SK-N-SH (cell line): ENCODE measurements at regions of chr11 and their contacts with region 1.

Region 1: DNA sequence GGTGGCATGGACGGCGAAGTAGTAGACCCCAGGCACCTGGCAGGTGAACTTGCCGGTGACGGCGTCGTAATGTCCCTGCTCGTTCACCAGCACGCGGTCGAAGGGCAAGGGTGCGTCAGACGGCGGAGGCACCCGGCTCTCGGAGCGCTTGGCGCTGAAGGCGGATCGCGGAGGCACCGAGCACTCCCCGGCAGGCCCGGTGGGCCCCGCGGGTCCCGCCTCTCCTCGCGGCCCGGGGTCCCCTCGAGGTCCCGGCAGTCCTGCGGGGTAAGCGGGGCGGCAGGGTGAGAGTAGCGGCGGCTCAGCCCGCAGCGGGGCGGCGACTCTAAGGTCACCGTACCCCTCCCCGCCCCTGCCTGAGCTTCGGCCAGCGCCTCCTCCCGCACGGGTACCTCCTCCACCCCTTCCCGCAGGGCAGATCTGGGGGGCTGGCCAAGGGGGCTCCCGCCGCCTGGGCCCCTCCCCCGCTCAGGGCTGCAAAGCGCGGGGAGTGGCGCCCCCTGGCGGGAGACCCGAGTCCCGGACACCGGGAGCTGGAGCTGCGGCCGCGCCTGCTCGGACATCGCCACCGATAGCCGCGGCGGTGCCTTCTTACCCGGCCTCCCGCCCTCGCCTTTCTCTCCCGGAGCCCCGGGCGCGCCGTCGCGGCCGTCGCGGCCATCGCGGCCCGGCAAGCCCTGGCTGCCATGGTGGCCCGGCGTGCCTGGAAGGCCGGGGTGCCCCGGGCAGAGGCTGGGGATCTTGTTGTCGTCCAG is 917 bp downstream of the C1QTNF5 start:
- DNase-seq: peak; percentile 95
- H3K4me3 ChIP-seq: peak overlapping the region; percentile 37 to 49; a peak in 3 of 4 replicates
- H3K27ac ChIP-seq: no peak overlapping the region; a peak in 1 of 4 replicates
- H3K4me1 ChIP-seq: peaks cover 16 to 41% of the 10 kb centered on the region in 2 experiments; a peak in 3 of 4 replicates
- H3K27me3 ChIP-seq: no peaks in the 10 kb centered on the region
- CTCF ChIP-seq: peak; percentile 75
- EP300 ChIP-seq: no peak
- RAD21 ChIP-seq: peak; percentile 44; the same call in 1 of the 2 replicates

Region 2: GRCh38 chr11:119130662-119131061 is 209.1 kb before region 1 on chr11:
- CTCF ChIA-PET with region 1: no interaction called
- POLR2A ChIA-PET with region 1: no interaction called
- DNase-seq: no peak
- H3K4me3 ChIP-seq: no peak overlapping the region
- H3K27ac ChIP-seq: no peak overlapping the region
- H3K4me1 ChIP-seq: no peaks in the 10 kb centered on the region
- H3K27me3 ChIP-seq: no peaks in the 10 kb centered on the region
- CTCF ChIP-seq: no peak
- EP300 ChIP-seq: no peak
- RAD21 ChIP-seq: no peak

Region 3: DNA sequence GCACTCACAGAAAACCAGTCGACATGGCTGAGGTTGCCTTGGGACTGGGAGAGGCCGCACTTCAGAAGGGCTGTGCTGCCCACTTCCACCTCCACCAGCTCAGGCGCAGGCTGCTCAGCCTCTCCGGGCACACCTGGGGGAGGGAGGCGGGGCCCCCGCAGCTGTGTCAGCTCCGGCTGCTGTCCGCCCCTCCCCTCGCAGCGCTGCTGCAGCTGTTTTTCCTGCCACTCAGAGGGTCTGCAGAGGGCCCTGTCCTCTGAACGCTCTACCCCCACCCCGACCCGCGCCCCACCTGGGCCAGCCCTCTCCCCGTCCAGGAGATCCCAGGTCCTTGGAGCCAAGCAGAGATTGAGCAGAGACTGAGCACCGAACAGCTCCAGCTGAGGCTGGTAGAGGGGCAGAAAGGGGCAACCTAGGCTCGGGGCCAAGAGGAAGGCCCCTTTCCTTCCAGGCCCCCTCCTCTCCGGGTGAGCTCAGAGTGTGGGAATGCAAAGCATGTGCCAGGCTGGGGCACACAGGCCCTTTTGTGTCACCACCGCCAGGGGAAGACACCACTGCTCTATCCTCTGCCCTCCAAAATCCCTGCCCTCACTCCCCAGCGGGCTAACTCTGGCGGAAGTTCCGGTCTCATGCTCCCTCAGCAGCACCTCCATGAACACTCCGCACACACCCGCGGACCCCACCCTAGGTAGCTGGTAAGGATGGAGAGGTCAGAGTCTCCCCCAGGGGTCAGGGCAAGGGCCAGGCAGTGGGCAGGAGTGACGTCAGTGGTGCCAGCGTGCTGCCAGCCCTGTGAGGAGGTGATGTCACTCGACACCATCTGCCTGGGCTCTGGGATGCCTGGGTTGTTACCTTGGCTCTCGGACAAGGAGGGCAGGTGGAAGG is 24.4 kb before region 1 on chr11:
- CTCF ChIA-PET with region 1: interaction called, 106 read pairs
- POLR2A ChIA-PET with region 1: interaction called, 4 read pairs
- DNase-seq: peak; percentile 72
- H3K4me3 ChIP-seq: peak overlapping the region; percentile 55 to 68; a peak in 3 of 4 replicates
- H3K27ac ChIP-seq: no peak overlapping the region
- H3K4me1 ChIP-seq: peaks cover 12 to 31% of the 10 kb centered on the region in 2 experiments; a peak in 2 of 4 replicates
- H3K27me3 ChIP-seq: no peaks in the 10 kb centered on the region
- CTCF ChIP-seq: peak; percentile 19; the same call in 1 of the 2 replicates
- EP300 ChIP-seq: no peak
- RAD21 ChIP-seq: no peak